H1 (cell line): ENCODE measurements at regions of chr2 and their contacts with region 1.

Region 1: DNA sequence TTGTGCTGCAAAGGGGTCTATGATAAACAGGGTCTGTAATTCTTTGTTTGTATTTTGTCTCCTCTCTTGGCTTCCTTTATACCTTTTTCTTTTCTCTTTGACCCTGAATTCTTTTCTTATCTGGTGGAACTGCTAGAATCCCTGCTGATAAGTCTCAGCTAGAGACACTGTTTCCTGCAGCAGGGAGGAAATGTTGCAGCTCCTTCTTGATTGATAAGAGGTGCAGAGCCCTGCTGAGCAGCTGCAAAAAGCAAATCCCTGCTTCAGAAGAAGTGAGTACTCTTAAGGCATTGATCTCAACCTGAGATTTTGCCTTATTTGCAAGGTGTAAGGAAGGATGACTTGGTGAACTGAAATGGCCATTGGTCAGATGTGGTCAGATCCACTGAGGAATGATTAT is 167.8 kb downstream of the NUP35 start:
- DNase-seq: no peak
- H3K4me3 ChIP-seq: no peak overlapping the region
- H3K27ac ChIP-seq: no peak overlapping the region
- H3K4me1 ChIP-seq: peaks cover 0 to 5% (median 2%) of the 10 kb centered on the region in 4 experiments; a peak in 2 of 7 replicates
- H3K27me3 ChIP-seq: peaks cover 0 to 7% (median 0%) of the 10 kb centered on the region in 4 experiments; a peak in 4 of 7 replicates
- CTCF ChIP-seq: no peak
- EP300 ChIP-seq: no peak
- POLR2A ChIP-seq: no peak
- RAD21 ChIP-seq: no peak

Region 2: GRCh38 chr2:183248866-183249567 is 43.0 kb before region 1 on chr2:
- CTCF ChIA-PET with region 1: interaction called, 21 read pairs
- POLR2A ChIA-PET with region 1: no interaction called
- DNase-seq: no peak
- H3K4me3 ChIP-seq: no peak overlapping the region
- H3K27ac ChIP-seq: no peak overlapping the region
- H3K4me1 ChIP-seq: peaks cover 0 to 2% (median 0%) of the 10 kb centered on the region in 4 experiments; a peak in 1 of 7 replicates
- H3K27me3 ChIP-seq: no peaks in the 10 kb centered on the region
- CTCF ChIP-seq: peak in 1 of 3 experiments; percentile 51; a peak in 1 of 4 replicates
- EP300 ChIP-seq: no peak
- POLR2A ChIP-seq: no peak
- RAD21 ChIP-seq: peak; percentile 59 to 67